Mammary epithelial cell (primary cell): ENCODE measurements at regions of chr17 and their contacts with region 1.

Region 1: DNA sequence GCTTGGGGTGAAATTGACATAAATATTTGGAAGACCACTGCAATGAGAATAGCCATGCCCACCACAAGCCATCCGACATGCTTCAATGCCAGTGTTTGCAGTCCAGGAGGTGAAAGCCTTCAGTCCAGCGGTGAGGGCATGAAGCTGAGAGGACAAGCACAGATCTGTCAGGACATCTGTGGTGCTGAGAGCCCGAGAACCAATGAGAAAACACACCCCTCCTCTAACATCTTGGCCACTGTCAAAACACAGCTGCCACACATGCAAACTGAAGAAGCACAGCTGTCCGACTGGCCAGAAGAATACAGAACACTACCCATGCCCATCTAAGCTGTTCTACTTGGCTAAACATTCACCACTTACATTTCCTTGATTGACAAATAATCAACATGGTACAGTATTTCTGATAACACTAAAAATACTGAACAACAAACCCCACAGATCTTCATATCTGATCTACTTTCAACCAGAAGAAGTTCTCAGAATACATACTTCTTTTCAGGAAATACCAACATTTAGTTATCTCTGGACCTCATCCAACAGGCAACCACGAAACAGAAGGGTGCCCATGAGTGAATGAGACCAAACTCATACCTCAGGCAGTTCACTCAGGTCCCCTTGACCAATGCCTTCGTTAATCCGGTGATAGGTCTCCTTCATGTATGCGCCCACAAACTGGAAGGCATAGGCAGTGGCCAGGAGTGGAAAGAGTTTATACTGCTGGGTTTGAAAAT is 10.1 kb upstream of the FBF1 start:
- DNase-seq: no peak
- H3K4me3 ChIP-seq: no peak overlapping the region
- H3K27ac ChIP-seq: no peak overlapping the region
- H3K4me1 ChIP-seq: no peaks in the 10 kb centered on the region
- H3K27me3 ChIP-seq: no peaks in the 10 kb centered on the region
- CTCF ChIP-seq: no peak

Region 2: DNA sequence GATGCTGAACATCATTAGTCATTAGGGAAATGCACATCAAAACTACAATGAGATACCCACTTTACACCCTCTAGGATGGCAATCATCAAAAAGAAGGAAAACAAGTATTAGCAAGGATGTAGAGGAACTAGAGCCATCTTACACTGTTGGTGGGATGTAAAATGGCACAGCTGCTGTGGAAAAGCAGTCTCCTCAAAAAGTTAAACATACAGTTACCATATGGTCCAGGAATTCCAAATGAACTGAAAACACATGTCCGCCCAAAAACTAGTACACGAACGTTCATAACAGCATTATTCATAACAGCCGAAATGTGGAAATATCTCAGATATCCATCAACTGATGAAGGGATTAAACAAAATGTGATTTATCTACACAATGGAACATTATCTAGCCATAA is 17.2 kb before region 1 on chr17:
- CTCF ChIA-PET with region 1: interaction called, 14 read pairs
- dilution Hi-C with region 1: no loop called
- in situ Hi-C with region 1: no loop called
- intact Hi-C with region 1: no loop called
- DNase-seq: no peak
- H3K4me3 ChIP-seq: no peak overlapping the region
- H3K27ac ChIP-seq: no peak overlapping the region
- H3K4me1 ChIP-seq: no peaks in the 10 kb centered on the region
- H3K27me3 ChIP-seq: no peaks in the 10 kb centered on the region
- CTCF ChIP-seq: no peak